Activated CD4-positive, alpha-beta T cell treated with anti-CD3 and anti-CD28 coated beads for 36 hours (primary cell): ENCODE measurements at regions of chr1 and their contacts with region 1.

Region 1: GRCh38 chr1:87131809-87132283 is 196.8 kb upstream of the LMO4 start:
- DNase-seq: peak; percentile 87
- ATAC-seq: peak; percentile 97
- H3K4me3 Mint-ChIP-seq: peak overlapping the region; percentile 62
- H3K27ac Mint-ChIP-seq: no peak overlapping the region
- H3K4me1 Mint-ChIP-seq: peaks cover 7% of the 10 kb centered on the region
- H3K27me3 Mint-ChIP-seq: peaks cover 17% of the 10 kb centered on the region

Region 2: DNA sequence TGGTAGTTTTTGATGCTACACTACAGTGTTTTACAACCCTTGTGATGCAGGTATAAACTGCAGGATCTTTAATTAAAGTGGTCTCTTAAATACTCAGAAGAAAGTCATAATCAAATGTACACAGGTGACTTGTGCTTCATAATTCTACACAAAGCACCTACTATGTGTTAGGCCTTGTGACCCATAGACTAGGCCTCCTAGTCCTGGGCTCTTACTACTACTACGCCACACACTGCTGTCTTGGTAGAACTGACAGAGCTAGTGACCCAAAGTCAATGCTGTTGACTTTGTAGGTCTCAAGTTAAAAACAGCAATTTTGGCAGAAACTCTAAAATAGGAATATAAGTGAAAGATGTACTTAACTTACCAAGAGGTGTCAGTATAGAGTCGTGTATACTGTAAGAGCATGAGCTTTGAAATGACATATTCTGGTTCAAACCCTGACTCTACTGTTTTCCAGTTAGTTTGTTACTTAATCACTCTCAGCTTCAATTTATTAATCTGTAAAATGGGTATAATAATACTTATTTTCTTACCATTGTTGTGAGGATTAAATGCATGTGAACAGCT is 148.2 kb after region 1 on chr1:
- CTCF ChIA-PET with region 1: no interaction called
- POLR2A ChIA-PET with region 1: no interaction called
- intact Hi-C with region 1: loop called in 1 of 2 experiments (anchors 5 kb)
- DNase-seq: no peak
- ATAC-seq: no peak
- H3K4me3 Mint-ChIP-seq: no peak overlapping the region
- H3K27ac Mint-ChIP-seq: no peak overlapping the region
- H3K4me1 Mint-ChIP-seq: no peaks in the 10 kb centered on the region
- H3K27me3 Mint-ChIP-seq: no peaks in the 10 kb centered on the region

Region 3: DNA sequence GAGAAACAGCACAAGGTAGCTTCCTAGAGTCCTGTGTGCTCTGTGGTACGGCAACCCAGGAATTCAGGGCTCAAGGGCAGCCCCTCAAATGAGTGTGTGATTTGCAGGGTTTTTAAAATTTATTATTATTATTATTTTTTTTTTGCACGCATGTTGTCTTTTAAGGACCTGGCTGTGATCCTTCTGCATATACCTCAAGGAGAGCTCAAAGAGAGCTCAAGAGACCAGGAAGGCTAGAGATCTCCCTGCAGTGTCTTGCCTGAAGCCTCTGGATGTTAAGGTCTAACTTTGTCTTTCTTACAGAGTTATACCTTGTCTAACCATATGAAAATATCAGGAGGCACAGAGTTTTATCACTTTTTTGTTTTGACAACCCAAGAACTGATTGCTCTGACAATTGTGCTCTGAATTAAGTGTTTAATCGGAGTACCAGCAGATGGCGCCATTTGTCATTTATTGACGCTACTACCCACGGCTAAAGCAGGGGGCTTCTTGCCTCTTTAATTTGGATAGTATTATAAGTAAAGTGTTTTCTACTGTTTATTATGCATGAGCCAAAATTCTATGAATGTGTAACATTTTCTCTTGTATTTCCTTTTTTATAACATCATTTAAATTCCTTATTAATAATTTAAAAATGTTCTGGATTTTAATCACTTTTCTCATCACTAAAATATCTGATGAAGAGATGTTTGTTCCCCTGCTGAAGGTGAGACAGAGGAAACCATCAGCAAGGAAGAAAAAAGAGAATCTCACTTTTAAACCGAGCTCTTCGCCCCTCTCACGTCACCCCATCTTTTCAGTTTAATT is 161.0 kb after region 1 on chr1:
- CTCF ChIA-PET with region 1: interaction called, 4 read pairs
- POLR2A ChIA-PET with region 1: no interaction called
- intact Hi-C with region 1: loop called in 1 of 2 experiments (anchors 5 kb)
- DNase-seq: peak; percentile 76
- ATAC-seq: peak; percentile 51
- H3K4me3 Mint-ChIP-seq: no peak overlapping the region
- H3K27ac Mint-ChIP-seq: no peak overlapping the region
- H3K4me1 Mint-ChIP-seq: no peaks in the 10 kb centered on the region
- H3K27me3 Mint-ChIP-seq: peaks cover 3% of the 10 kb centered on the region

Region 4: DNA sequence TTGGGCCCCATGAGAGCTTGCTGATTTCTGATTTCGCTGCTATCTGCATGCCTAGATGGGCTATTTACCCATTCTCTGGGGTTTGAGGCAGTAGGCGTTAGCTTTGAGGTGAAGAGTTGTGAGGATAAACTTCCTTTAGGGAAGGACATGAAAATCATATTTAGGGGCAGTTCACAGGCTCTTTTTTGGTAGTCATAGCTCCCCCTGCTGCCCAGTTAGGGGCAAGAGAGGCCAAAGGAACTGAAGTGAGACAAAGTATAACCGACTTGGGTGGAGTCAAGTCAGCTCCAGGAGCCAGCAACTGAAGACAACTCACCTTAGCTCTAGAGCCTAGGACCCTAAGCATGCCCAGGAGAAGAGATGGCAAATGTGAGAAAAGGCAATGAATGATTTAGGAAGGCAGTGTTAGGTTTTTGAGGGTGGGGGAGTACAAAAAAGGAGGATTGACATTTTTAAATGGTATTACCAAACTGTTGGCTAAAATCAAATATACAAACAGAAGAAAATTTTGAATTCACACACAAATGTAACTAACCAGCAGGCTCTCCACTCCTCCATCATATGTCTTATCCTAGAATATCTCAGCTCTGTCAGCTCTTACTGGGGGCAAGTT is 822.0 kb after region 1 on chr1:
- CTCF ChIA-PET with region 1: interaction called, 5 read pairs
- POLR2A ChIA-PET with region 1: no interaction called
- intact Hi-C with region 1: loop called (anchors 1 to 10 kb)
- DNase-seq: peak; percentile 64
- ATAC-seq: peak; percentile 57
- H3K4me3 Mint-ChIP-seq: no peak overlapping the region
- H3K27ac Mint-ChIP-seq: no peak overlapping the region
- H3K4me1 Mint-ChIP-seq: no peaks in the 10 kb centered on the region
- H3K27me3 Mint-ChIP-seq: peaks cover 10% of the 10 kb centered on the region

Region 5: GRCh38 chr1:88061492-88062177 is 929.8 kb after region 1 on chr1:
- CTCF ChIA-PET with region 1: no interaction called
- POLR2A ChIA-PET with region 1: no interaction called
- intact Hi-C with region 1: loop called in 1 of 2 experiments (anchors 5 kb)
- DNase-seq: peak; percentile 40
- ATAC-seq: no peak
- H3K4me3 Mint-ChIP-seq: no peak overlapping the region
- H3K27ac Mint-ChIP-seq: no peak overlapping the region
- H3K4me1 Mint-ChIP-seq: no peaks in the 10 kb centered on the region
- H3K27me3 Mint-ChIP-seq: peaks cover 1% of the 10 kb centered on the region

Region 6: GRCh38 chr1:88595355-88596002 is 1463.6 kb after region 1 on chr1:
- CTCF ChIA-PET with region 1: no interaction called
- POLR2A ChIA-PET with region 1: no interaction called
- intact Hi-C with region 1: loop called in 1 of 2 experiments (anchors 5 kb)
- DNase-seq: no peak
- ATAC-seq: peak; percentile 63
- H3K4me3 Mint-ChIP-seq: no peak overlapping the region
- H3K27ac Mint-ChIP-seq: no peak overlapping the region
- H3K4me1 Mint-ChIP-seq: peaks cover 4% of the 10 kb centered on the region
- H3K27me3 Mint-ChIP-seq: peaks cover 3% of the 10 kb centered on the region